ENCODE measurements at regions of chr6 and their contacts with region 1.

Region 1: DNA sequence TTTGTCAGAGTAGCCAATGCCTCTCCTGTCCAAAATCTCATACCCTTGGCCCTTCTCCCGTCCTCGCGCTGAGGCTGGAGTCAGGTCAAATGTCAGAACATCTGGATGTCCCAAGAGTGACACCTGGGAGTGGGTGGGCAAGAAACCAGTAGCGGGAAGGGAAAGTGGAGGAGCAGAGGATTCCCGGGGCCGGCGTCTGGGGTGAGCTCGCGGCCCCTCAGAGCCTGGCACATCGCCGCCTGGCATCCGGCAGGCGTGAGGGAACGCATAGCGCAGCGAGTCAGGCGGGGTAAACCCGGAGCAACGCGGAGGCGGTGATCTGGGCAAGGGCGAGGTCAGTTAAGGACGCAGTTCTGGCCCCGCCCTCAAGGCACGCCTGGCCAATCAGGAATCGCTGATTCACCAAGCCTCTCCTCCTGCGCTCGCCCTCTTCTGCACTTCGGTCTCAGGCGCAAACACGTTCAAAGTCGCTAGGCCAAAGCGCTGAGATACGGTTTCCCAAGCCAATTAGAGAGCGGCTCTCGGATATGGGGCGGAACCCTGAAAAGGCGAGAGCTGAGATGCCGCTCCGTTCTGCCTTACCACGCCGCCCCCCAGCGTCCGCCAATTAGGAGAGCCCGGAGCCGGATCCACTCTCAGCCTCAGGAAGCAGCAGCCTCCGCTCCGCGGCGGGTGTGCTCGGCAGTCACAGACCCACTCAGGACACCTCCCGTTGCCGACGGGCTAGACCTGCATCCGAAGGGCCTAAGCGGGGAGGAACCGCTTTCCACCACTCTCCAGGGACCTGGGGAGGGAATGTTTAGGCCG is 22.5 kb downstream of the VPS52 start:
- DNase-seq: peak; percentile 99
- ATAC-seq: peak; percentile 91
- H3K4me3 Mint-ChIP-seq: peak overlapping the region; percentile 92
- H3K27ac Mint-ChIP-seq: peak overlapping the region; percentile 97
- H3K4me1 Mint-ChIP-seq: peaks cover 34% of the 10 kb centered on the region
- H3K27me3 Mint-ChIP-seq: no peaks in the 10 kb centered on the region
- CTCF ChIP-seq: no peak

Region 2: GRCh38 chr6:33118525-33119123 is 130.5 kb before region 1 on chr6:
- CTCF ChIA-PET with region 1: interaction called, 75 read pairs
- POLR2A ChIA-PET with region 1: interaction called, 8 read pairs
- intact Hi-C with region 1: loop called (anchors 2 kb)
- DNase-seq: no peak
- ATAC-seq: peak; percentile 53
- H3K4me3 Mint-ChIP-seq: no peak overlapping the region
- H3K27ac Mint-ChIP-seq: no peak overlapping the region
- H3K4me1 Mint-ChIP-seq: peaks cover 11% of the 10 kb centered on the region
- H3K27me3 Mint-ChIP-seq: peaks cover 36% of the 10 kb centered on the region
- CTCF ChIP-seq: peak; percentile 72

Region 3: GRCh38 chr6:33154349-33154748 is 94.8 kb before region 1 on chr6:
- CTCF ChIA-PET with region 1: interaction called, 65 read pairs
- POLR2A ChIA-PET with region 1: interaction called, 7 read pairs
- intact Hi-C with region 1: no loop called
- DNase-seq: no peak
- ATAC-seq: no peak
- H3K4me3 Mint-ChIP-seq: no peak overlapping the region
- H3K27ac Mint-ChIP-seq: no peak overlapping the region
- H3K4me1 Mint-ChIP-seq: no peaks in the 10 kb centered on the region
- H3K27me3 Mint-ChIP-seq: peaks cover 12% of the 10 kb centered on the region
- CTCF ChIP-seq: no peak

Region 4: DNA sequence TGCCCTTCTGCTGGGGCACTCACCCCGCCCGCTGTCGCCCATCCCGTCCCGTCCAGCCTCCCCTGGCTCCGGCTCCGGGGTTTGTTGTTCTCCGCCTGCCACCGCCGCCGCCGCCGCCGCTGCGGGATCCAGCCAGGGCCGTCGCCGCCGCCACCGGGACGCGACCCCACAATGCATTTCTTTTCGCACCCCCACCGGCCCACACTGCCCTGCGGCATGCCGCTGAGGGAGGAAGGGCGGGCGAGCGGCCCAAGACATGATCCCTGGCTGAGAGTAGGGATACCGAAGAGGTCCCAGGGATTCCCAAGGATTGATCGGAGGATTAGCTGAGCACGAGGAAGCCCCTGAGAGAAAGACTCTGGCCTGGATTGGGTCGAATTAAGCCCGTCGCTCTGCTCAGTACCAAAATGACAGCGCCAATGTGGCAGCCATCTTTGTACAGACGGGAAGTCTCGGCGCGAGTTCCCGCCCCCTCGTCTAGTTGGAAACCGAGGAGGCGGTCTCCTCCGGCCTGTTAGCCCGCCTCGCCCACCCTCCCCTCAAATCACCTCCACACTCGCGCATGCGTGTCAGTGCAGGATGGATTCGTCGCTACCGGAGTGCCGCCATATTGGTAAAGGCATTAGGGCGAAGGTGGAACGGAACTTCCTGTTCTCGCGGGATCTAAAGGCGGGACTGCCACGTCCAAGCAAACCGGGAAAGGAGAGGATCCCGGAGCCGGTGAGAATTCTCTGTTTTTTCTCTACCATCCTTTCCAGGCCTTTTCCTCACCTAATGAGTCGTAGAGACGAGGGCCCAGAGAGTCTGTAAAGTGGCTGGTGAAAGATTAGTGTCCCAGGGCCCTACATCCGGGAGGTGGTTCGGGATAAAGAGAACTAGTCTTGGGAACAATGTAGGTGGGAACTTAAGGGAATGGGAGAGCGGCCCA is 48.6 kb before region 1 on chr6 and contains the starts of genes RXRB and SLC39A7:
- CTCF ChIA-PET with region 1: interaction called, 51 read pairs
- POLR2A ChIA-PET with region 1: interaction called, 11 read pairs
- intact Hi-C with region 1: no loop called
- DNase-seq: peak; percentile 100
- ATAC-seq: peak; percentile 66
- H3K4me3 Mint-ChIP-seq: peak within 1 kb of the TSS; percentile 98
- H3K27ac Mint-ChIP-seq: peak within 1 kb of the TSS; percentile 99
- H3K4me1 Mint-ChIP-seq: peaks cover 61% of the 10 kb centered on the region
- H3K27me3 Mint-ChIP-seq: no peaks in the 10 kb centered on the region
- CTCF ChIP-seq: no peak
- total RNA-seq, gene RXRB: 41.2 to 41.9 TPM
- total RNA-seq, gene SLC39A7: 43.1 to 43.3 TPM

Region 5: GRCh38 chr6:33235221-33235634 is 13.9 kb before region 1 on chr6:
- CTCF ChIA-PET with region 1: interaction called, 15 read pairs
- POLR2A ChIA-PET with region 1: interaction called, 7 read pairs
- intact Hi-C with region 1: no loop called
- DNase-seq: no peak
- ATAC-seq: no peak
- H3K4me3 Mint-ChIP-seq: no peak overlapping the region
- H3K27ac Mint-ChIP-seq: no peak overlapping the region
- H3K4me1 Mint-ChIP-seq: peaks cover under 1% of the 10 kb centered on the region
- H3K27me3 Mint-ChIP-seq: peaks cover 12% of the 10 kb centered on the region
- CTCF ChIP-seq: no peak

Region 6: GRCh38 chr6:33335916-33336315 is 86.8 kb after region 1 on chr6:
- CTCF ChIA-PET with region 1: no interaction called
- POLR2A ChIA-PET with region 1: no interaction called
- intact Hi-C with region 1: no loop called
- DNase-seq: no peak
- ATAC-seq: no peak
- H3K4me3 Mint-ChIP-seq: no peak overlapping the region
- H3K27ac Mint-ChIP-seq: no peak overlapping the region
- H3K4me1 Mint-ChIP-seq: peaks cover 15% of the 10 kb centered on the region
- H3K27me3 Mint-ChIP-seq: no peaks in the 10 kb centered on the region
- CTCF ChIP-seq: no peak